ENCODE measurements at regions of chr1 and their contacts with region 1.

Region 1: GRCh38 chr1:103514920-103515503 is 10.5 kb upstream of the RNPC3 start:
- DNase-seq: peak; percentile 16
- CTCF ChIP-seq: peak; percentile 81

Region 2: GRCh38 chr1:103101399-103101798 is 413.6 kb before region 1 on chr1:
- CTCF ChIA-PET with region 1: interaction called, 29 read pairs
- POLR2A ChIA-PET with region 1: no interaction called
- DNase-seq: no peak
- CTCF ChIP-seq: no peak

Region 3: GRCh38 chr1:103106426-103107341 is 408.3 kb before region 1 on chr1:
- CTCF ChIA-PET with region 1: interaction called, 29 read pairs
- POLR2A ChIA-PET with region 1: no interaction called
- DNase-seq: peak; percentile 34
- CTCF ChIP-seq: peak; percentile 34

Region 4: DNA sequence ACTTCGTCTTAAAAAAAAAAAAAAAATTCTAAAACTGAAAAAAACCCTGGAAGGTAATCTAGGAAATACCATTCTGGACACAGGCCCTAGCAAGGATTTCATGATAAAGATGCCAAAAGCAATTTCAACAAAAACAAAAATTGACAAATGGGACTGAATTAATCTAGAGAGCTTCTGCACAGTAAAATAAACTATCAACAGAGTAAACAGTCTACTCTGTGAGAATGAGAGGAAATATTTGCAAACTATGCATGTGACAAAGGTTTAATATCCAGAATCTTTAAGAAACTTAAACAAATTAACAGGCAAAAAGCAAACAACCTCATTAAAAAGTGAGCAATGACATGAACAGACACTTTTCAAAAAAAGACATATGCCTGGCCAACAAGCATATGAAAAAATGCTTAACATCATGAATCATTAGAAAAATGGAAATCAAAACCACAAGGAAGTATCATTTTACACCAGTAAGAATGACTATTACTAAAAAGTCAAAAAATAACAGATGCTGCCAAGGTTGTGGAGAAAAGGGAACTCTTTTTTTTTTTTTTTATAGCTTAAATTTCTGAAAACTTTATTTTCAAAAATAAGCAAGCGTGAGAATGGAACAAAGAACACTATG is 18.9 kb before region 1 on chr1:
- CTCF ChIA-PET with region 1: interaction called, 16 read pairs
- POLR2A ChIA-PET with region 1: no interaction called
- DNase-seq: no peak
- CTCF ChIP-seq: no peak

Region 5: GRCh38 chr1:103525607-103526507 is 10.8 kb after region 1 on chr1 and contains the start of gene RNPC3:
- CTCF ChIA-PET with region 1: interaction called, 26 read pairs
- POLR2A ChIA-PET with region 1: interaction called, 4 read pairs
- DNase-seq: peak; percentile 84
- CTCF ChIP-seq: no peak

Region 6: DNA sequence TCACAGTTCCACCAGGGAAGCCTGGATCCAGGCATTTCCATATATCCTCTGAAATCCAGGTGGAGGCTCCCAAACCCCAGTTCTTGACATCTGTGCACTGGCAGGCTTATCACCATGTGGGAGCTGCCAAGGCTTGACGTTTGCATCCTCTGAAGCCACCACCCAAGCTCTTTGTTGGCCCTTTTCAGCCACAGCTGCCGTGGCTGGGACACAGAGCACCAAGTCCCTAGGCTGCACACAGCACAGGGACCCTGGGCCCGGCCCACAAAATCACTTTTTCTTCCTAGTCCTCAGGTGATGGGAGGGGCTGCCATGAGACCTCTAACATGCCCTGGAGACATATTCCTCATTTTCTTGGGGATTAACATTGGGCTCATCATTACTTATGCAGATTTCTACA is 32.8 kb after region 1 on chr1:
- CTCF ChIA-PET with region 1: no interaction called
- POLR2A ChIA-PET with region 1: no interaction called
- DNase-seq: no peak
- CTCF ChIP-seq: no peak